ENCODE measurements at regions of chr1 and their contacts with region 1.

Region 1: DNA sequence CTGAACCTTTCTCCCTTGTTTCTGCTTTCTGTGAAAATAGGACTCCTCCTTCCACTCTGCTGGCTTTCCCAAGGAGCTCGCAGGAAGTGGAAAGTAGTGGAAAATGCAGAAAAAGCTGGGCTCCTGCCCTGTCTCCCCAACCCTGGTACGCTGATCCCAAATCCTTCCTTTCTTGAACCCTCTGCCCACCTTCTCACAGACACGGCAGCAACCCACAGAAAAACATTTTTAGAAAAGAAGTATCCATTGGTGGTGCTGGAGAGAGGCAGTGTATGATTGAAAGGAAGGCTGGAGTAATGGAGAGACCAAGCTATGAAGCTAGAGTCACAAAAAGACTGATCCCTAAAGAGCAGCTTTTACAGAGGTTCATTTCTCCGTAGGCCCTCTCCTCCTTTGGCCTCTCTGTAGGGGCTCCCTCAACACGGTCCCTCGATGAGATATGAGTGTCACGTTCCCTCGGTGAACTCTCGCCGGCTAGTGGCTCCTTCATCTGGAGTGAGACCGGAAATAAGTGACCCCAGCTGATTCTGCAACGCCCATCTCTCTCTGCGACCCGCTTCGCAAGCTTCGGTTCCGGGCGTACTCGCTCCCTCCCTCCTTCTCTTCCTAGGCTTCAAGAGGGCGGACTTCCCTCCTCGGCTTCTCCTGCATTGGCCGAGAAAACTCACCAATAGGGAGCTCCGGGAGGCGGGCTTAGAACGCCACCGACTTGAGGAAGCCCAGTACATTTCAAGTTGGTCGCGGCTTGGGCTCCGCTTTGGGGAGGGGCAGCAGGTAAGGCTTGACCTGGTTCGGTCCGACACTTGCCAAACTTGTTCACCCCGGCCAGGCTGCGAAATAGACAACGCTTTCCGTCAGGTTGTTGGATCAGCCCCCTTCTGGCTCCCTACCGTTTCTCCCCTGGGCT is at the starts of genes ANKRD34A and POLR3GL:
- DNase-seq: peak; percentile 80
- ATAC-seq: peak; percentile 95
- H3K4me3 ChIP-seq: peak within 1 kb of the TSS; percentile 79
- H3K27ac ChIP-seq: peak within 1 kb of the TSS; percentile 73
- H3K4me1 ChIP-seq: peaks cover 19% of the 10 kb centered on the region
- H3K27me3 ChIP-seq: no peaks in the 10 kb centered on the region; a peak in 1 of 4 replicates
- CTCF ChIP-seq: no peak
- EP300 ChIP-seq: no peak
- POLR2A ChIP-seq: peak; percentile 98
- RAD21 ChIP-seq: no peak
- polyA plus RNA-seq, gene ANKRD34A: 0.40 to 0.42 TPM
- polyA plus RNA-seq, gene POLR3GL: 12.8 to 25.5 TPM

Region 2: GRCh38 chr1:145751491-145752037 is 212.7 kb before region 1 on chr1:
- CTCF ChIA-PET with region 1: no interaction called
- POLR2A ChIA-PET with region 1: no interaction called
- RAD21 ChIA-PET with region 1: no interaction called
- SMC1A ChIA-PET with region 1: no interaction called
- in situ Hi-C with region 1: no loop called
- intact Hi-C with region 1: no loop called
- DNase-seq: no peak
- ATAC-seq: no peak
- H3K4me3 ChIP-seq: no peak overlapping the region
- H3K27ac ChIP-seq: no peak overlapping the region
- H3K4me1 ChIP-seq: no peaks in the 10 kb centered on the region
- H3K27me3 ChIP-seq: no peaks in the 10 kb centered on the region
- CTCF ChIP-seq: no peak
- EP300 ChIP-seq: no peak
- POLR2A ChIP-seq: no peak
- RAD21 ChIP-seq: no peak

Region 3: DNA sequence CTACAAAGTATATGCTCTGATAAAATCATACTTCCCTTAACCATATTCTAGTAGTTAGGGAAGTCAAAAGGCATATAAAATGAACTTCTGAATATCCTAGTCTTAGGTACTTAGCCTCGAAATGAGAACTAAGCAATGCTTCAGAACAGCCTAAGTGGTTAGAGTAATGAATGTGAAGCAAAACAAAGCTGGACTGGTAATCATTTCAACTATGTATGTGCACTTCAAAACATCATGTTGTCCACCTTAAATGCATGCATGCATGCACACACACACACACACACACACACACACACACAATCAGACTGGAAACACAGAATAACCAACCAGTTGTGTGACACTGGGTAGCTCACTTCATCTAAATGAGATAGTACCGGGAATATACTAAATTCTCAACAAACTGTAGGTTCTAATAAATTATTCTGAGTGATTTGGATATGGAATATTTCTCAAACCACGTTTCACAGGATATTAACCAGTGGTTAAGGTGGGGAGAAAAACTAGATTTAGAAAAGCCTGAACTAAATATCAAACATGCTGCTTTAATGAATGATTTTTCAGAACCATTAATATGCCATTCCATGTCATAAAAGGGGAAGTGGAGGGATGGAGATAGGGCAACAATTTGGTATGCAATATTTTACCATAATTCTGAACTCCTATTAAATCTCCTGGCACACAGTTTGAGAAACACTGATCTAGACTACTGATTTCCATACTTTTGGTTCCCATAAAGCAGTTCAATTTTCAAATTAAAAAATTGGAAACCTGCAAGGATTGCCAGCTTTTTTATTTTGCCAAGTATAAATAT is 159.8 kb before region 1 on chr1:
- CTCF ChIA-PET with region 1: no interaction called
- POLR2A ChIA-PET with region 1: no interaction called
- RAD21 ChIA-PET with region 1: no interaction called
- SMC1A ChIA-PET with region 1: no interaction called
- in situ Hi-C with region 1: no loop called
- intact Hi-C with region 1: no loop called
- DNase-seq: no peak
- ATAC-seq: no peak
- H3K4me3 ChIP-seq: no peak overlapping the region
- H3K27ac ChIP-seq: no peak overlapping the region
- H3K4me1 ChIP-seq: no peaks in the 10 kb centered on the region; the same call in none of the 2 replicates
- H3K27me3 ChIP-seq: no peaks in the 10 kb centered on the region
- CTCF ChIP-seq: no peak
- EP300 ChIP-seq: no peak
- POLR2A ChIP-seq: no peak
- RAD21 ChIP-seq: no peak

Region 4: GRCh38 chr1:145927063-145927886 is 37.0 kb before region 1 on chr1 and contains the start of gene RBM8A:
- CTCF ChIA-PET with region 1: interaction called, 28 read pairs
- POLR2A ChIA-PET with region 1: interaction called, 58 read pairs
- RAD21 ChIA-PET with region 1: interaction called, 23 read pairs
- SMC1A ChIA-PET with region 1: interaction called, 29 read pairs
- in situ Hi-C with region 1: no loop called
- intact Hi-C with region 1: loop called (anchors 2 kb)
- DNase-seq: peak; percentile 99
- ATAC-seq: peak; percentile 98
- H3K4me3 ChIP-seq: peak within 1 kb of the TSS; percentile 90
- H3K27ac ChIP-seq: peak within 1 kb of the TSS; percentile 97
- H3K4me1 ChIP-seq: peaks cover 6% of the 10 kb centered on the region; the same call in 1 of the 2 replicates
- H3K27me3 ChIP-seq: no peaks in the 10 kb centered on the region
- CTCF ChIP-seq: peak; percentile 37 to 67 (median 58)
- EP300 ChIP-seq: 0 out of 4 replicates have a peak, but pooled peaks of 1 of the 2 experiments have one; percentile 11
- POLR2A ChIP-seq: peak; percentile 95
- RAD21 ChIP-seq: no peak
- polyA plus RNA-seq, gene RBM8A: 665 to 1,248 TPM

Region 5: DNA sequence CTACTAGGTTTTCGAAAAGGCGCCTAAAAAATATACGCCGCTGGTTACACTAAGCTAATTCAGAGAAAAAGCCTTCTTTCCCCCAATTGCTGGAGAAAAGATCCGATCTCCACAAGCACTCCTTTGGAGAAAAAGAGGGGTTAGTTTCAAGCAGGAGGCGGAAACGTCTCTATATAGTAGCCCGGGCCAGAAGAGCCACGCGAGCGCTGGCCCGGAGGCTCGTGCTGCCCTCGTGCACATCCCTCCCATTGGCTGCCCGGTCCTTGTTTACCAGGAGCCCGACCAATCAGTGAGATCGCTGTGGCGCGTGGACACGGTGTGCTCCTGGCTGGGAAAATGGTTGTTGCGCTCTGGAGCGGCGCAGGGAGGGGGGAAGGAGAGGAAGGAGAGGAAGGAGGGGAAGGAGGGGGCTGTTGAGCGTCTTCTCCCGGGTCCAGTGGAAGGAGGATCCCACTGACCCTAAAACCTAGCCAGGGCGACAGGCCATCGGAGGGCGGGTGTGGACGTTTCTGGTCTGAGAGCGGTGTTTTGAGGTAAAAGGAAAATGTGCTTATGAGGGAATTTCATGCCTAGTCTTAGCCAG is 32.3 kb after region 1 on chr1 and contains the start of gene TXNIP:
- CTCF ChIA-PET with region 1: interaction called, 3 read pairs
- POLR2A ChIA-PET with region 1: interaction called, 18 read pairs
- RAD21 ChIA-PET with region 1: interaction called, 4 read pairs
- SMC1A ChIA-PET with region 1: interaction called, 5 read pairs
- in situ Hi-C with region 1: no loop called
- intact Hi-C with region 1: no loop called
- DNase-seq: peak; percentile 51
- ATAC-seq: peak; percentile 92
- H3K4me3 ChIP-seq: peak within 1 kb of the TSS; percentile 81
- H3K27ac ChIP-seq: peak within 1 kb of the TSS; percentile 82
- H3K4me1 ChIP-seq: peaks cover 8% of the 10 kb centered on the region
- H3K27me3 ChIP-seq: no peaks in the 10 kb centered on the region
- CTCF ChIP-seq: no peak
- EP300 ChIP-seq: no peak; a peak in 1 of 4 replicates
- POLR2A ChIP-seq: peak; percentile 86
- RAD21 ChIP-seq: no peak
- polyA plus RNA-seq, gene TXNIP: 48.7 to 75.5 TPM

Measured in GM12878 (cell line).